Caco-2 (cell line): ENCODE measurements at regions of chr6 and their contacts with region 1.

Region 1: DNA sequence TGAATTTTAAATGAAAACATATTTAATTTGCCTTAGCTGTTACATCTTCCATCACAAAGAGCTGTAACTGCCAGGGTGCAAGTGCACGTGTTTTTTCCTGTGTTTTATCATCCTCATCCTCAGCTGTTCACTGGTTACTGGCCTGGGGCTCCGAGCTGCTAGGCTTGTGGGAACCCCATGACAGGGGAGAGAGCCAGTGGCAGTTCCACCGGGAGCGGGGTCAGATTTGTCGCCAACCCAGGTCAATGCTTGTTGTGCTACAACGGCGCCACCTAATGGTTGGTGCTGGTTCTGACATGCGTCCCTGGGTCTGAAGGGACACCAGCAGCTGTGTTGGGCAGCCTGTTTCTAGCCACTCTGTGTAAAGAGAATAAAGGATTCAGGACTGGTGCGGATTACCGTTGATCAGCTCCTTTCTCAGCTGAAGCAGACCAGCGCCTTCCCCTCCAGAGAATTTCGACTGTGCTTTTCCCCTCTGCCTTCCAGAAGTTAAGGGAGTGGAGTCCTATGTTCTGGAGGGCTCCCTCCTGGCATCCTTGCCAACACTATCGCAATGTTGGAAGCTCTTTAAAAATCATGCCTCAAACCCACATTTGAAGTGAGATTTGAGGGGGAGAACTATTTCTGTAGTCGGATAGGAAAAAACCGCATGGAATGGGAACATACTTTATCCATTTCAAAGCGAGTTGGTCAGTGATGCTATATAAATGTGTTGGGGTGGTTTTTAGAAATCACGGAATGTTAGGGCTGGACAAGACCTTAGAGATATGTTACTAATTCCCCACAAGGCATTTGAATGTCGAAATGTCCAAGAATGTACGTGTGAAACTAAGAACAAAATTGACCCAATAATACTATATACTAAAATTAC is 32.1 kb downstream of the SUMO4 start:
- DNase-seq: peak; percentile 87 to 91
- H3K4me3 ChIP-seq: no peak overlapping the region
- H3K4me3 Mint-ChIP-seq: no peak overlapping the region
- H3K27ac Mint-ChIP-seq: no peak overlapping the region
- H3K4me1 ChIP-seq: no peaks in the 10 kb centered on the region
- H3K4me1 Mint-ChIP-seq: peaks cover 8% of the 10 kb centered on the region
- H3K27me3 ChIP-seq: no peaks in the 10 kb centered on the region
- H3K27me3 Mint-ChIP-seq: peaks cover 2% of the 10 kb centered on the region
- CTCF ChIP-seq: peak; percentile 79 to 88

Region 2: DNA sequence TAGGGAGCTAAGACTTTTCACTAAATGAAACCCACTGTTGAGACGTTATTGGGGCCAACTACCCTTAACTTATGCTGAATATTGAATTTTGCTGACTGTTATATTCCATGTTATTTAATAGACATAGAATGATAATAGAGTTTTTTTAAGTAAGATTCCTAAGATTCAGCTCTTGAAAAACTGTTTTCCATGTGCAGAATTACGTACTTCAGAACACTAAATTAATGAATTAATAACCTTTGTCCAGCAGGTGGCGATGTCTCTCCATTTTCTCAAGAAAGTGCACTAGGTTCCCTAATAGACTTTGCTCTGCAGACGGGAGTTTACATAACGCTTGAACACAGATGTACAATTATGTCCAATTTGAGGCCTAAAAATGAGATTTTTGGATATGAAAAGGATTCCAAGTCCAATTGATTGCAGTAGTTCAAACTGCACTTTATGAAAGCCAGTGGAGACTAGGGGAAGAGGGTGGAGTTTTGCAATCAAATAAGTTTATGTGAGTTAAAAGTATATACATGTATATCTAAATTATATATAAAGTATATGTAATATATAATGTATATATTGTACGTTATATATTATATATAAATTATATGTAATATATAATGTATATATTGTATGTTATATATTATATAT is 403.3 kb before region 1 on chr6:
- CTCF ChIA-PET with region 1: interaction called, 14 read pairs
- POLR2A ChIA-PET with region 1: no interaction called
- intact Hi-C with region 1: loop called (anchors 1 kb)
- DNase-seq: peak; percentile 55 to 74
- H3K4me3 ChIP-seq: no peak overlapping the region
- H3K4me3 Mint-ChIP-seq: no peak overlapping the region
- H3K27ac Mint-ChIP-seq: no peak overlapping the region
- H3K4me1 ChIP-seq: no peaks in the 10 kb centered on the region
- H3K4me1 Mint-ChIP-seq: peaks cover 6% of the 10 kb centered on the region
- H3K27me3 ChIP-seq: no peaks in the 10 kb centered on the region
- H3K27me3 Mint-ChIP-seq: no peaks in the 10 kb centered on the region
- CTCF ChIP-seq: peak; percentile 42 to 61

Region 3: DNA sequence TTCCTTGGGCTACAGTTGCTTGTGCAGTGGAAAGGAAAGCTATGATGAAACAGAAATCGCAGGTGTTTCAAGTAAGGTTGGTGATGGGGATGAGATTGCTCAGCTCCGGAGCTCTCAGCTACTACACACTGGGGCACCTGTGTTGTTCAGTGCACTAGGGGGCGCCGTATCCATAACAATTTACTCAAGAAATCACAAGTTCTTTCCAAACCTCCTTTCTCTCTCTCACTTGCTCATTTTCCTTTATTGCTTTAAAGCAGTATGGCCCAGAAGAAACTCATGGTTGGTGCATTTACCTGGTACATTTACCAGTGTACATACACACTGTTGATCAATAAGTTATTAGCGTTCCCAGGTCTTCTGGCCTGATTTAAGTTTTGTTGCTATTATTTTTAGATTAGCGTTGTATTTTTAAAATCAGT is 349.8 kb before region 1 on chr6:
- CTCF ChIA-PET with region 1: interaction called, 14 read pairs
- POLR2A ChIA-PET with region 1: no interaction called
- intact Hi-C with region 1: loop called (anchors 1 kb)
- DNase-seq: peak; percentile 75 to 79
- H3K4me3 ChIP-seq: no peak overlapping the region
- H3K4me3 Mint-ChIP-seq: no peak overlapping the region
- H3K27ac Mint-ChIP-seq: no peak overlapping the region
- H3K4me1 ChIP-seq: no peaks in the 10 kb centered on the region
- H3K4me1 Mint-ChIP-seq: no peaks in the 10 kb centered on the region
- H3K27me3 ChIP-seq: no peaks in the 10 kb centered on the region
- H3K27me3 Mint-ChIP-seq: no peaks in the 10 kb centered on the region
- CTCF ChIP-seq: peak; percentile 76 to 77

Region 4: GRCh38 chr6:149301063-149301462 is 131.1 kb before region 1 on chr6:
- CTCF ChIA-PET with region 1: no interaction called
- POLR2A ChIA-PET with region 1: no interaction called
- intact Hi-C with region 1: no loop called
- DNase-seq: no peak
- H3K4me3 ChIP-seq: no peak overlapping the region
- H3K4me3 Mint-ChIP-seq: no peak overlapping the region
- H3K27ac Mint-ChIP-seq: no peak overlapping the region
- H3K4me1 ChIP-seq: no peaks in the 10 kb centered on the region
- H3K4me1 Mint-ChIP-seq: no peaks in the 10 kb centered on the region
- H3K27me3 ChIP-seq: no peaks in the 10 kb centered on the region
- H3K27me3 Mint-ChIP-seq: no peaks in the 10 kb centered on the region
- CTCF ChIP-seq: no peak

Region 5: DNA sequence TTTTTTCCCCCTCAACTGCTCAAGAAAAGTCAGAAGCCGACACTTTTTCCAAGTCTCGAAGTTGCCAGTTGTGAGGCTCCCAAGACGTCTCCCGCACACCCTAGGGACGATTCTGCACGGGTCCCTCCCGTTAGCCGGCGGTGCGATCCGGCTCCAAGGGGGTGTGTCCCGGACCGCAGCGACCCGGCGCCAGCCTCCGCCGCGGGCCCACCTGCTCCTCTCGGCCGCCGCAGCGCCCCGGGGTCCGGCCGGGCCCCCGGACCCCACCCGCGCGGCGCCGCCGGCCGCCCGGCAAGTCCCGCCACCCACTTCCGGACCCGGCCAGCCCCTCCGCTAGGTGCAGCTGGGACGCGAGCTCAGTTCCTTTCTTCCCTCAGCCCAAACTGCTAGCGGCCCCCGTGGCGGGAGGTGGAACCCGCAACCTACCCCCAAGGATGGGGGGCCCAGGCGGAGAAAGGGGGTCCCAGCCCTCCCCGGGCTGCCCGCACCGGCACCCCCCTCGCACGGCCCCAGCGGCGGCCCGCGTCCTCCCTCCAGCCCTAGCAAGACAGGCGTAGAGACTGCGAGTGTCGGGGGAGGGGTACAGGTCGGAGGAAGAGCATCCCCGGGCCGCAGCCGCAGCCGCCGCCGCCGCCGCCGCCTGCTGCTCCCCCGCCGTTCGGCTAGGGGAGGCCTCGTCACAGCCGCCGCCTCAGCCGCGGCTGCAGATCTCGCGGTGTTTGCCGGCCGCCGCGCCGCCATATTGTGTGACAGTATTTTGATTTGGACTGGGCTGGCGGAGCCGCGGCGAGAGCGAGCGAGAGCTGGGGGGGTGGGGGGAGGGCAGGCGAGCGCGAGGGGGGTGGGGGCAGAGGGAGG is 115.1 kb before region 1 on chr6:
- CTCF ChIA-PET with region 1: no interaction called
- POLR2A ChIA-PET with region 1: no interaction called
- intact Hi-C with region 1: loop called (anchors 2 kb)
- DNase-seq: peak; percentile 90 to 92
- H3K4me3 ChIP-seq: peak overlapping the region; percentile 97
- H3K4me3 Mint-ChIP-seq: peak overlapping the region; percentile 89
- H3K27ac Mint-ChIP-seq: peak overlapping the region; percentile 60
- H3K4me1 ChIP-seq: peaks cover 19% of the 10 kb centered on the region; the same call in 1 of the 2 replicates
- H3K4me1 Mint-ChIP-seq: peaks cover 8% of the 10 kb centered on the region
- H3K27me3 ChIP-seq: no peaks in the 10 kb centered on the region
- H3K27me3 Mint-ChIP-seq: no peaks in the 10 kb centered on the region
- CTCF ChIP-seq: no peak

Region 6: DNA sequence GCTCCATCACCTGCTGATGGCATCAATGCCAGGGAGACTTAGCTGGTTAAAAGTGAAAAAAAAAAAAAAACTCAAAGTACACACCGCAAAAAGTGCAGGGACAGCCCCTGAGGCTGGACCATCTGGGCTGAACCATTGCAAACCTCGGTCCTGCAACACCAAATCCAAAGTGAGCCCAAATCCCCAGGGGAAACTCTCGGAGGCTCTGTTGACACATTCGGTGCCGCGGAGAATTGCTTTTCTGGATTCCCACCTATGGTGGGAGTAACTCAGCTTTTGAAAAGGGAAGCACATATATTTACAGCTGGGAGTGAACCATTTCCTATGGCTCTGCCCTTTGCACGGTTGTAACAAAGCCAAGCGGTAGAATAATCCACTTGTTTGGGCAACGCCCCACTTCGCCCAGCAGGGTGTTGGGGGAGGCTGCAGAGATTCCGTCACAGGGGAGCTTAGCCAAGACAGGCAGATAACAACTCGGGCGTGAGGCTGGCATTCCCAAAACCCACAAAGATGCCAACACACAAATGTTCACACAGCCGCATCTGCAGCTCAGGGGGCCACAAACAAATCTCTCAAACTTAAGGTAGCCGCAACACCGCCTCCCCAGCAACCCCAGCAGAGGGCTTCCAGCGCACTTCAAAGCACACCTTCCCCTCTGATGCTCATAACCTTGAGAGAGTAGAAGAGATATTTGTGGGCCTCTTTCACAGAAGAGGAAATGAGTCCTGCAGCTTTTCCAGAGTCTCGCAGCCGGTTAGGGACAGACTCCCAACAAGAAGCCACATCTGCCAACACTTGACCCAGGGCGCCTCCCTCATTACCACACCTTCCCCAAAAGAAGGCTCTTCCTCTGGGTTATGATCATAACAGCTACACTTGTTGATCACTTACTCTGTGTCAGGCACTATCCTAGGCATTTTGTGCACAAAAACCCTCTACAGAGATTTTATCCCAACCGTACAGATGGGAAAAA is 41.2 kb after region 1 on chr6:
- CTCF ChIA-PET with region 1: no interaction called
- POLR2A ChIA-PET with region 1: no interaction called
- intact Hi-C with region 1: no loop called
- DNase-seq: no peak
- H3K4me3 ChIP-seq: no peak overlapping the region
- H3K4me3 Mint-ChIP-seq: no peak overlapping the region
- H3K27ac Mint-ChIP-seq: no peak overlapping the region
- H3K4me1 ChIP-seq: no peaks in the 10 kb centered on the region
- H3K4me1 Mint-ChIP-seq: no peaks in the 10 kb centered on the region
- H3K27me3 ChIP-seq: no peaks in the 10 kb centered on the region
- H3K27me3 Mint-ChIP-seq: no peaks in the 10 kb centered on the region
- CTCF ChIP-seq: no peak